Lower leg skin (tissue), 4 donors: ENCODE measurements at regions of chr19 and their contacts with region 1.

Region 1: GRCh38 chr19:46265217-46265828 is 31.5 kb upstream of the HIF3A start:
- DNase-seq: peak in 1 of 2 donors; percentile 80
- H3K4me3 ChIP-seq: no peak overlapping the region
- CTCF ChIP-seq: peak in 1 of 3 donors; percentile 89
- POLR2A ChIP-seq: no peak

Region 2: GRCh38 chr19:46030812-46031550 is 234.3 kb before region 1 on chr19:
- intact Hi-C with region 1: loop called (anchors 10 kb)
- DNase-seq: peak in 1 of 2 donors; percentile 65
- H3K4me3 ChIP-seq: no peak overlapping the region
- CTCF ChIP-seq: no peak
- POLR2A ChIP-seq: no peak

Region 3: GRCh38 chr19:46076951-46077816 is 188.1 kb before region 1 on chr19:
- intact Hi-C with region 1: loop called (anchors 10 kb)
- DNase-seq: peak; percentile 54 to 88
- H3K4me3 ChIP-seq: no peak overlapping the region
- CTCF ChIP-seq: peak in 1 of 3 donors; percentile 47
- POLR2A ChIP-seq: no peak